ENCODE measurements at regions of chr7 and their contacts with region 1.

Region 1: GRCh38 chr7:129218514-129219062 is 6.2 kb upstream of the AHCYL2 start:
- H3K4me3 ChIP-seq: no peak overlapping the region
- H3K27ac ChIP-seq: no peak overlapping the region
- H3K4me1 ChIP-seq: no peaks in the 10 kb centered on the region
- CTCF ChIP-seq: peak; percentile 87

Region 2: GRCh38 chr7:129030440-129030839 is 188.1 kb before region 1 on chr7:
- CTCF ChIA-PET with region 1: no interaction called
- POLR2A ChIA-PET with region 1: no interaction called
- H3K4me3 ChIP-seq: no peak overlapping the region
- H3K27ac ChIP-seq: no peak overlapping the region
- H3K4me1 ChIP-seq: no peaks in the 10 kb centered on the region
- CTCF ChIP-seq: no peak

Region 3: GRCh38 chr7:129238546-129238945 is 20.0 kb after region 1 on chr7:
- CTCF ChIA-PET with region 1: interaction called, 12 read pairs
- POLR2A ChIA-PET with region 1: no interaction called
- H3K4me3 ChIP-seq: no peak overlapping the region
- H3K27ac ChIP-seq: no peak overlapping the region
- H3K4me1 ChIP-seq: no peaks in the 10 kb centered on the region
- CTCF ChIP-seq: no peak

Region 4: DNA sequence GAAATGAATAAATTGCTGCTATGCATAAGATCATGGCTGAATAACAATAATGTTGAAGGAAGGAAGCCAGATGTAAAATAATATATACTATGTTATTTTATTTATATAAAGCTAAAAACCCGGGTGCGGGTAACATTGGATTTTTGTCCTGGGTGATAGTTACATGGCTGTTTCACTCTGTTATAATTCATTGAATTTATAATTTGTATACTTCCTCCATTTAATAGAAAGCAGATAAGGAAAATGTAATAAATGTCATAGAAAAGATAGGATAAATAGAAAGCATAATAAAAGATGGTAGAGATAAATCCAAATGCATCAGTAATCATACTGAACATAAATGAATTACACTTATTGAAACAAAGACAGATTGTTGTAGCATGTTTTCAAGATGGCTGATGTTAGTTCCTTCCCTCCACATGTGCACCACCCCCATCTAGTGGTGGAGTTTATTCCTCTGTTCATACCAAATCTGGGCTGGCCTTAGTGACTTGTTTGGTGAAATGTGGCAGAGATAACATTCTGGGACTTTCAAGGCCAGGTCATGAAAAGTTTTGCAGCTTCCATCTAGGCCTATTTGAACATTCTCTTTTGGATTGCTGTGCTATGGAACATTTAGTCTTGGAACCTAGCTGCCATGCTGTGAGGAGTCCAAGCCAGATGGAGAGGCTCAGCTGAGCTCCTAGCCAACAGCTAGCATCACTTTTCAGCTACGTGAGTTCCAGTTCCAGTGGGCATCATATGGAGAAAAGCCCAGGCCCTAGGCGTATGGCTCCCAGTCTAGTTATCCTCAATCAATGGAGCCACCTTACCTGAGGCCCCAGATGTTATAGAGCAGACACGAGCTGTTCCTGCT is 53.1 kb after region 1 on chr7:
- CTCF ChIA-PET with region 1: interaction called, 95 read pairs
- POLR2A ChIA-PET with region 1: no interaction called
- H3K4me3 ChIP-seq: no peak overlapping the region
- H3K27ac ChIP-seq: no peak overlapping the region
- H3K4me1 ChIP-seq: no peaks in the 10 kb centered on the region
- CTCF ChIP-seq: 0 out of 2 replicates have a peak, but pooled peaks have one; percentile 31

Region 5: GRCh38 chr7:129298268-129298893 is 79.8 kb after region 1 on chr7:
- CTCF ChIA-PET with region 1: interaction called, 79 read pairs
- POLR2A ChIA-PET with region 1: no interaction called
- H3K4me3 ChIP-seq: no peak overlapping the region
- H3K27ac ChIP-seq: no peak overlapping the region
- H3K4me1 ChIP-seq: peaks cover 8% of the 10 kb centered on the region
- CTCF ChIP-seq: no peak

Region 6: GRCh38 chr7:129343099-129343700 is 124.6 kb after region 1 on chr7:
- CTCF ChIA-PET with region 1: interaction called, 19 read pairs
- POLR2A ChIA-PET with region 1: no interaction called
- H3K4me3 ChIP-seq: no peak overlapping the region
- H3K27ac ChIP-seq: no peak overlapping the region
- H3K4me1 ChIP-seq: no peaks in the 10 kb centered on the region
- CTCF ChIP-seq: peak; percentile 23; the same call in 1 of the 2 replicates

Region 7: DNA sequence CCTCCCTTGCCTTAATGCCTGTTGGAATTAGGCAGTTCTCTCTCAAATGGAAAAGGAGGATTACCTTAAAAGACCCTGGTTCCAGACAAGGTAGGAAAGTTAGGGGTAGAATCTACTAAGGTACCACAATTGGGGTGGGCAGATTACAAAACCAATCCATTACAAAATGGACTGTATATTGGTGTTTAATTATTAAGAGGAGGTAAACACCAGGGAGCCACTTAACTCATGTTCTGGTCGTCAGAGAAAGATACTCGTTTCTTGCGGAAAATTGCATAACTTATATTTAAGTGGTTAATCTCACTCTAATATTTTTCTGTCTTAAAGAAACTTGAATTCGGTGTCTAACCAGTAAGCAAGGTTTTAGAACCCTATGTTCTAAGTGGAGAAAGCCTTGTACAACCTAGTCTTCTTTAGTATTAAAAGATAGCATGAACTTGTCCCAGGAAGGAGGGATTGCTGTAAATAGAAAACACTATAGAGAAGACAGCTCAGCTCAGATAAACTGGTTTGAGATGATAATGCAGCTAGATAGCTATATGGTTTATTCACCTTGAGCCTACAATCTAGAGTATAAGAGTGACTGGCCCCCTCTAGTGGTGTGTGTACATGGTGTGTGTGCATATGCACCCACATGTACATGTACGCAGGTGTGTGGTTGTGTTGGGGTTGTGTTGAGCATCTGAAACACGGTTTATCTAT is 157.6 kb after region 1 on chr7:
- CTCF ChIA-PET with region 1: interaction called, 33 read pairs
- POLR2A ChIA-PET with region 1: no interaction called
- H3K4me3 ChIP-seq: no peak overlapping the region
- H3K27ac ChIP-seq: no peak overlapping the region
- H3K4me1 ChIP-seq: no peaks in the 10 kb centered on the region
- CTCF ChIP-seq: no peak

Region 8: DNA sequence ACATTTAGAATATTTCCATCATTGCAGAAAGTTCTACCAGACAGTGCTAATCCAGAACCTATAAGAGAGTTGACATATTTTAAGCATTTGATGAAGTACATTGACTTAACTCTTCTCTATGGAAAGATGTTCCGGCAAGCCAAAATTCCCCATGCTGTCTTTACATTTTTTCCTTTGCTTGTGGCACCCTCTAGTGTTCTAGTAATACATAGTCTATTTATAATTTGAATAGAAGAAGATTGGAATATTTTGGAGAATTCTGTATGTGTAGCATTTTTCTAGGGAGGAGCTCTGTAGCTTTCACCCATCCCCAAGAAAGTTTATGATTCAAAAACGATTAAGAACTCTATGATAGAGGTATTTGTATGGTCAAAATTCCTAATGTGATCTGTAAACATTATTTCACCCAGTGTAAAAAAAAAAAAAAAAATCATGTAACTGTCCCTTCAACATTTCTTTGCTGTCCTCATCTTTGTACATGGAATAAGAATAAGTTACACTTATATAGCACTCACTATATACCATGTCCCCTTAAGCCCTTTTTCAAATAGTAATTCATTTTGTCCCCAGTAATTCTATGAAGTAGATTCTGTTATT is 426.1 kb after region 1 on chr7:
- CTCF ChIA-PET with region 1: interaction called, 29 read pairs
- POLR2A ChIA-PET with region 1: no interaction called
- H3K4me3 ChIP-seq: no peak overlapping the region
- H3K27ac ChIP-seq: no peak overlapping the region
- H3K4me1 ChIP-seq: 0 out of 2 replicates have a peak, but pooled peaks cover 5% of the 10 kb centered on the region
- CTCF ChIP-seq: no peak

Measured in HEK293 (cell line).